Gastrocnemius medialis (tissue), 4 donors: ENCODE measurements at regions of chr18 and their contacts with region 1.

Region 1: GRCh38 chr18:23231340-23232021 is 96.2 kb downstream of the CABLES1 start:
- DNase-seq: peak; percentile 54 to 72
- ATAC-seq: peak; percentile 68 to 80
- H3K4me3 ChIP-seq: no peak overlapping the region
- H3K27ac ChIP-seq: peak overlapping the region; percentile 47 to 72 (median 56)
- H3K4me1 ChIP-seq: peaks cover 9 to 17% of the 10 kb centered on the region in 2 donors
- H3K27me3 ChIP-seq: no peaks in the 10 kb centered on the region
- CTCF ChIP-seq: no peak
- POLR2A ChIP-seq: peak in 1 of 2 donors; percentile 26

Region 2: GRCh38 chr18:23356915-23357601 is 125.6 kb after region 1 on chr18:
- in situ Hi-C with region 1: no loop called
- intact Hi-C with region 1: loop called (anchors 5 kb)
- DNase-seq: no peak
- ATAC-seq: peak; percentile 27 to 42
- H3K4me3 ChIP-seq: no peak overlapping the region
- H3K27ac ChIP-seq: peak overlapping the region; percentile 42 to 66 (median 50)
- H3K4me1 ChIP-seq: peaks cover 9 to 24% of the 10 kb centered on the region in 2 donors
- H3K27me3 ChIP-seq: no peaks in the 10 kb centered on the region
- CTCF ChIP-seq: no peak
- POLR2A ChIP-seq: no peak

Region 3: GRCh38 chr18:23437357-23438045 is 206.0 kb after region 1 on chr18:
- in situ Hi-C with region 1: loop called in 1 of 4 experiments (anchors 25 kb)
- intact Hi-C with region 1: no loop called
- DNase-seq: peak; percentile 44 to 68
- ATAC-seq: peak; percentile 90 to 95
- H3K4me3 ChIP-seq: peak overlapping the region; percentile 86 to 97 (median 93)
- H3K27ac ChIP-seq: peak overlapping the region; percentile 47 to 71 (median 62)
- H3K4me1 ChIP-seq: peaks cover 8 to 15% of the 10 kb centered on the region in 2 donors
- H3K27me3 ChIP-seq: no peaks in the 10 kb centered on the region
- CTCF ChIP-seq: no peak
- POLR2A ChIP-seq: peak in 1 of 2 donors; percentile 10